ENCODE measurements at regions of chr17 and their contacts with region 1.

Region 1: GRCh38 chr17:77054936-77055335 is 85.8 kb upstream of the SEC14L1 start:
- DNase-seq: no peak
- ATAC-seq: no peak
- H3K4me3 ChIP-seq: no peak overlapping the region
- H3K4me3 Mint-ChIP-seq: no peak overlapping the region
- H3K27ac ChIP-seq: no peak overlapping the region
- H3K27ac Mint-ChIP-seq: no peak overlapping the region
- H3K4me1 ChIP-seq: peaks cover 0 to 5% of the 10 kb centered on the region in 2 donors
- H3K4me1 Mint-ChIP-seq: peaks cover 2% of the 10 kb centered on the region
- H3K27me3 ChIP-seq: peaks cover 0 to 19% (median 5%) of the 10 kb centered on the region in 4 experiments
- H3K27me3 Mint-ChIP-seq: peaks cover 31% of the 10 kb centered on the region
- CTCF ChIP-seq: no peak

Region 2: DNA sequence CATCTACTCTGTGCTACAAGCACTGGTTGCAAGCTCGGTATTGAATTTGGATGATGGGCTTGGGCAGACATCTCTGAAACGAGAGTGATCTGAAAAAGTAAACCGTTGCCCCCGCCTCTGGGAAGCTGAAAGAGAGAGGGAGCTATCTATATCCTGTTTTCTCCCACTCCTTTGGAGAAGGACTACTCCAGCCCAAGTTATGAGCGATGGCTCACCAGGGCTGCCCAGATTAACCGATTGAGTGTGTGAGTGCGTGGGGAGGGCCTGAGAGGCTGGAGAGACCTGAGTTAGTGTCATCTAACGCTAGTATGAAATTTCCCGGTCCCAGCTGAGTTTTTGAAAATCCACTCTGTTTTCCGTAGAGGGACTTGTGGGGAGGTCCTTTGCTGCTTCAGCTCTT is 175.2 kb before region 1 on chr17:
- CTCF ChIA-PET with region 1: interaction called, 14 read pairs
- POLR2A ChIA-PET with region 1: no interaction called
- intact Hi-C with region 1: no loop called
- DNase-seq: no peak
- ATAC-seq: no peak
- H3K4me3 ChIP-seq: no peak overlapping the region
- H3K4me3 Mint-ChIP-seq: no peak overlapping the region
- H3K27ac ChIP-seq: no peak overlapping the region
- H3K27ac Mint-ChIP-seq: no peak overlapping the region
- H3K4me1 ChIP-seq: no peaks in the 10 kb centered on the region
- H3K4me1 Mint-ChIP-seq: no peaks in the 10 kb centered on the region
- H3K27me3 ChIP-seq: no peaks in the 10 kb centered on the region
- H3K27me3 Mint-ChIP-seq: peaks cover 7% of the 10 kb centered on the region
- CTCF ChIP-seq: no peak

Region 3: DNA sequence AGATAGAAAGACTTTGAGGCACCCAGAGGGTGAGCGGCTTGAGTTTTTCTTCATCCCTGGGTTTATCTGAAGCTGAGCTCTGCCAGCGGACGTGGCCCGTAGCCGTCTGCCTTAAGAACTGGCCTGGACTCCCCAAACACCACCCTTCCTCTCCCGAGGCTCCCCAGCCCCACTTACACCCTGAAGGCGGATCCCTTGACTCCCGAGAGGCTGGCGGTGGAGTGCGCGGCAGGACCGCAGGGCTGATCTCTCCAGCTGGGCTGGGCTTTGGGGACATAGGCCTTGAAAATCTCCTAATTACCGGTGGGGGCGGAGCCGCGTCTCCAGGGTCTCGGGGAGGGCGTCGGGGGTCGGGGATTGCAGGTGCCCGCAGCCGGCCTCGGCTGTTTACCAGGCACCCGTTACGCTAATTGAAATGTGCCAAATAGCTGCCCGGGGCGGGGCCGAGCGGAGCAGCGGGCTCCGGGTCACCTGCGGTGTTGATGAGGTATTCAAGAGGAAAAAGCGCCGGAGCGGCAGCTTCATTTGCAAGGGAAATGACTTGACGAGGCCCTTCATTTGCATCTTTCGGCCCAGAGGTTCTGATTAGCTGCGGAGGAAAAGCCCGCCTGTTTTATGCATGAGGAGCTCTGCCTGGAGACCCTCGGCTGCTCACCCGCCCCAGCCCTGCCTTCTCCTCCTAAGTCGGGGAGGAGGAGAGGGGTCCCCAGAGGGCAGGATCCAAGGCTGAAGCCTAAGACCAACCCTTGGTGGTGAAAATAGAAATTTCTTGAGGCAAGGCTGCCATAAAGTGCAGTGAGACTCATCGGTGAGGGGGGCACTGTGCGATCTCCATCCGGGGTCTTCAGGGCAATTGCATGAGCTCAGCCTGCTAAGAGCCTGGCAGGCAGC is 86.0 kb before region 1 on chr17:
- CTCF ChIA-PET with region 1: interaction called, 16 read pairs
- POLR2A ChIA-PET with region 1: no interaction called
- intact Hi-C with region 1: no loop called
- DNase-seq: peak; percentile 89
- ATAC-seq: peak; percentile 89
- H3K4me3 ChIP-seq: peak overlapping the region; percentile 26 to 58 (median 56)
- H3K4me3 Mint-ChIP-seq: peak overlapping the region; percentile 92
- H3K27ac ChIP-seq: peak overlapping the region; percentile 55 to 76
- H3K27ac Mint-ChIP-seq: peak overlapping the region; percentile 93
- H3K4me1 ChIP-seq: peaks cover 20 to 26% of the 10 kb centered on the region in 2 donors
- H3K4me1 Mint-ChIP-seq: peaks cover 29% of the 10 kb centered on the region
- H3K27me3 ChIP-seq: peaks cover 0 to 31% (median 13%) of the 10 kb centered on the region in 4 experiments
- H3K27me3 Mint-ChIP-seq: peaks cover 26% of the 10 kb centered on the region
- CTCF ChIP-seq: no peak

Region 4: GRCh38 chr17:77036807-77037381 is 18.0 kb before region 1 on chr17:
- CTCF ChIA-PET with region 1: interaction called, 15 read pairs
- POLR2A ChIA-PET with region 1: no interaction called
- intact Hi-C with region 1: no loop called
- DNase-seq: peak; percentile 16
- ATAC-seq: peak; percentile 49
- H3K4me3 ChIP-seq: no peak overlapping the region
- H3K4me3 Mint-ChIP-seq: peak overlapping the region; percentile 4
- H3K27ac ChIP-seq: no peak overlapping the region
- H3K27ac Mint-ChIP-seq: no peak overlapping the region
- H3K4me1 ChIP-seq: peaks cover 14 to 16% of the 10 kb centered on the region in 2 donors
- H3K4me1 Mint-ChIP-seq: peaks cover 19% of the 10 kb centered on the region
- H3K27me3 ChIP-seq: peaks cover 0 to 20% (median 3%) of the 10 kb centered on the region in 4 experiments
- H3K27me3 Mint-ChIP-seq: peaks cover 39% of the 10 kb centered on the region
- CTCF ChIP-seq: no peak

Region 5: DNA sequence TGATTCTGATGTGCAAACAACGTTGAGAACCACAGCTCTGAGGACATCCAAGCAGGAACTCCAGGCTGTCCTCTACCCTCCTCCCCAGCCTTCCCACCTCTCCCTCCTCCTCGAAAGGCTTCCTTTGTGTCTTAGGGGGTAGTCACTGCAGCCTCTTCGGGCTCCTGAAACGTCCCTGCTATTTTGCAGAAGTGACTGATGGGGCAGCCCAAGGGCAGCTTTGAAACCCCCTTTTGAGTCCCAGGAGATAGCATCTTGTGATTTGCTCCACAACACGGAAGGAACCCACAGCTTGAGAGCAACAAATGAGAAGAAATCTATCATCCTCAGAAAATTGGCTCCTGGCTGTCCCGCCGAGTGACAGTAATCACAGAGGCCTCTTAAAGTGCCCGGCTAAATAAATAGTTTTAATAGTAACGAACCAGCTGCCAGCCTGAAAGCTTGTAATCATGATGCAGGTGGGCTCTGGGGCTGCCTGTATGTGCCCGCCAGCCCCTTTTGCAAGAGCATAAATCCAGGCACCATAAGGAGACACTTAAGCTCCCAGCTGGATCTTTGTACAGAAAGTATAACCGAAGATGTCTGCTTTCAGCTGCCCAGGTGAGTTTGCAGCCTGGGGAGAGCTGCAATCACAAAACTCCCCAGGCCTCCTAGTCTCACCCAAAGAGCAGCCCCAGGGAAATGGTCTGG is 24.2 kb after region 1 on chr17:
- CTCF ChIA-PET with region 1: interaction called, 12 read pairs
- POLR2A ChIA-PET with region 1: no interaction called
- intact Hi-C with region 1: no loop called
- DNase-seq: peak; percentile 58
- ATAC-seq: peak; percentile 69
- H3K4me3 ChIP-seq: no peak overlapping the region
- H3K4me3 Mint-ChIP-seq: peak overlapping the region; percentile 13
- H3K27ac ChIP-seq: no peak overlapping the region
- H3K27ac Mint-ChIP-seq: peak overlapping the region; percentile 59
- H3K4me1 ChIP-seq: peaks cover 6 to 8% of the 10 kb centered on the region in 2 donors
- H3K4me1 Mint-ChIP-seq: peaks cover 9% of the 10 kb centered on the region
- H3K27me3 ChIP-seq: peaks cover 0 to 11% (median 0%) of the 10 kb centered on the region in 4 experiments
- H3K27me3 Mint-ChIP-seq: peaks cover 22% of the 10 kb centered on the region
- CTCF ChIP-seq: no peak

Region 6: DNA sequence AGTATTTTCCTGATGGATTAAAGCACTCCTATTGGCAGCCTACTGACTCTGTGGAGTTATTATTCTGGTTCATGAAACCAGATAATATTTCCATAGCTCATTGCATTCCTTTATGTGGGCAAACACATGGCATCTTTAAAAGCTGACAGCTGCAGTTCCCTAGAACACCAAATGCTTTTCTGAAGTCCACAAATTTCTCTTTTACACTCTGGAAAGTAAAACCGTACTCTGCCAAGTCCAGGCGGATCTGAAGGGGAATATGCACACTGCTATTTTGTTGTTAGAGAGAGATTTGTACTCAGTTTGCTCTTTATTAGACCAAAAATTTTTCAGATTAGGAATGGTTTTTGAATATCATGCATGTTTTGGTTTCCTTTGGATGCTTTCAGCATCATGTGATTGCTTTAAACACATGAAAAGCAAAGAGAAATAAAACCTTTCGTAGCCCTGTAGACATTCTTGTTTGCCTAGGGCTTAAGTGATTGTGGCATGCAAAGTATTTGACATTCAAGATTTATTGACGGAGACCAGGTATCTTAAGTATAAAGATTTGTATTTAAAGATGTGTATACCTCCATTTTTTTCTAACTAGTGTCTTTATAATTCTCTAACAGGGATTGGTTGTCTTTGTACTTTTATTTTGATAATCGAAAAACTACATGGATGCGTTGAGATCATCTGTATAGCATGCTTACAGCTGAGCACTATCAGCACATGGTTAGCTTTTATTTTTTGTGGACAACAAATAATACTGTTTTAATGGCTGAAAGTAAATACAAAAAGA is 105.3 kb after region 1 on chr17:
- CTCF ChIA-PET with region 1: no interaction called
- POLR2A ChIA-PET with region 1: no interaction called
- intact Hi-C with region 1: no loop called
- DNase-seq: no peak
- ATAC-seq: no peak
- H3K4me3 ChIP-seq: no peak overlapping the region
- H3K4me3 Mint-ChIP-seq: no peak overlapping the region
- H3K27ac ChIP-seq: no peak overlapping the region
- H3K27ac Mint-ChIP-seq: no peak overlapping the region
- H3K4me1 ChIP-seq: peaks cover 15 to 18% of the 10 kb centered on the region in 2 donors
- H3K4me1 Mint-ChIP-seq: peaks cover 69% of the 10 kb centered on the region
- H3K27me3 ChIP-seq: no peaks in the 10 kb centered on the region
- H3K27me3 Mint-ChIP-seq: no peaks in the 10 kb centered on the region
- CTCF ChIP-seq: no peak